ENCODE measurements at regions of chr15 and their contacts with region 1.

Region 1: GRCh38 chr15:99076552-99077308 is 28.1 kb upstream of the SYNM start:
- DNase-seq: peak; percentile 73
- H3K4me3 ChIP-seq: peak overlapping the region; percentile 6 to 50 (median 8)
- H3K27ac ChIP-seq: no peak overlapping the region
- H3K4me1 ChIP-seq: peaks cover 2% of the 10 kb centered on the region
- H3K27me3 ChIP-seq: peaks cover 0 to 2% of the 10 kb centered on the region in 2 experiments
- CTCF ChIP-seq: peak; percentile 71 to 83
- POLR2A ChIP-seq: no peak

Region 2: DNA sequence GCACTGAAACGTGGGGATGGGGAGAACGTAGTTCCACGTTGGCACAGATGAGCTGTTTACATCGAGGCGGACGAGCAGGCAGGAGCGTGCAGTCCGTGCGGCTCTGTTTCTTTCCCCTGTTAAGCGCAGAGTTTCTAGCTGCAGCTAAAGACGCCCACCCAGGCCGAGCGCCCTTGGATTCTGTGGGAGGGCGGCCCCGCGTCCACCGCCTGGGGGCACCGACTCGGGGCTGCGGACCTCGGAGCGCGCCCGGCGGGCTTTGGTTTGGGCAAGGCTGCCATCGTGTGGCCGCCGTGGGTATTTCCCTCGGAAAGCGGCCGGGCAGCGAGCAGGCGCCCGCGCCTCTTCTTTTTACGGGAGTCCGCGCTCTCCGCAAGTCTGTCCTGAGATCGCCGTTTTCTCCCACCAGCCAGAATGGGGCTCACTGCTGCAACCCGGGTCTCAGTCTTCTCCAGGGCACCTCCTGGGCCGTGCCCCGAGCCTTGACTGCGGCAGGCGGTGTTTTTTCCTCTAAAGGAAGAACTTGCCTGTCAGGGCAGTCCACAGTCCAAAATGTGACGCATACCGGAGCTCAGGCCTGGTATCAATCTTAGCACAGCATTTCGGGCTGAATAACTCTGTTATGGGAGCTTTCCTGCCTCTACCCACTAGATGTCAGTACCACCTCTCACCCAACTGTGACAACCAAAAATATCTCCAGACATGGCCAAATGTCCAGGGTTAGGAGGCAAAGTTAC is 648.3 kb before region 1 on chr15:
- CTCF ChIA-PET with region 1: interaction called, 13 read pairs
- POLR2A ChIA-PET with region 1: no interaction called
- dilution Hi-C with region 1: no loop called
- intact Hi-C with region 1: loop called (anchors 1 kb)
- DNase-seq: peak; percentile 60
- H3K4me3 ChIP-seq: no peak overlapping the region
- H3K27ac ChIP-seq: no peak overlapping the region
- H3K4me1 ChIP-seq: no peaks in the 10 kb centered on the region
- H3K27me3 ChIP-seq: no peaks in the 10 kb centered on the region
- CTCF ChIP-seq: peak; percentile 67 to 92
- POLR2A ChIP-seq: no peak

Region 3: GRCh38 chr15:98518823-98519561 is 557.7 kb before region 1 on chr15:
- CTCF ChIA-PET with region 1: interaction called, 170 read pairs
- POLR2A ChIA-PET with region 1: no interaction called
- dilution Hi-C with region 1: no loop called
- intact Hi-C with region 1: loop called (anchors 1 kb)
- DNase-seq: peak; percentile 64
- H3K4me3 ChIP-seq: no peak overlapping the region
- H3K27ac ChIP-seq: no peak overlapping the region
- H3K4me1 ChIP-seq: no peaks in the 10 kb centered on the region
- H3K27me3 ChIP-seq: no peaks in the 10 kb centered on the region
- CTCF ChIP-seq: peak; percentile 71 to 73
- POLR2A ChIP-seq: no peak

Region 4: GRCh38 chr15:98689431-98689861 is 387.3 kb before region 1 on chr15:
- CTCF ChIA-PET with region 1: no interaction called
- POLR2A ChIA-PET with region 1: no interaction called
- dilution Hi-C with region 1: no loop called
- intact Hi-C with region 1: no loop called
- DNase-seq: no peak
- H3K4me3 ChIP-seq: no peak overlapping the region
- H3K27ac ChIP-seq: no peak overlapping the region
- H3K4me1 ChIP-seq: no peaks in the 10 kb centered on the region
- H3K27me3 ChIP-seq: no peaks in the 10 kb centered on the region
- CTCF ChIP-seq: no peak
- POLR2A ChIP-seq: no peak

Region 5: DNA sequence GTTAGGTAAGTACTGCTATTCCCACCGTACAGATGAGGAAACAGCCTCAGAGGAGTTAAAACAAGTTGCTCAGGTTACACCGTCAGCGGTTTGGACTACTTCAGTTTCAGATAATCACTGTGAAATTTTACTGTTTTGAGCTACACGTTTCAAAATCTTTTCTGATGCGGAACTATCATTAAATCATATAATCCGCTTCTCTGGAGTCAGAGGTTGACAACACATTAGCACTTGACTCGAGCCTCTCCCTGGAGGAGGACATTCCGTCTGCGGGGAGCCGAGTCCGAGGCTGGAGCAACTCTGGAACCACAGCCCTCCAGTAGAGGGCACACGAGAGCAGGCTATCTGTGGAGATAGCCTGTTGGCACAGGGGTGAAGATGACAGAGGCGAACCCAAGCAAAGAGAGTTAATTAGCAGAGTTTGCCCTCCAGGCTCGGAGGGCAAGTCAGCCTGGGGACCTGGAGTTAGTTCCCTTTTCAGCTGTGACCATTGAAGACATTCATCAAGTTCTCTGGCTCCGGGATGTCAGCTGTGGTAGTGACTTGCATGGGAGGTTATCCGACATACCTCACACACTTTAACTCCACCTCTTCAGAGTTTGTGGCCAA is 297.2 kb before region 1 on chr15:
- CTCF ChIA-PET with region 1: interaction called, 9 read pairs
- POLR2A ChIA-PET with region 1: no interaction called
- dilution Hi-C with region 1: no loop called
- intact Hi-C with region 1: loop called (anchors 1 kb)
- DNase-seq: peak; percentile 77
- H3K4me3 ChIP-seq: no peak overlapping the region
- H3K27ac ChIP-seq: no peak overlapping the region
- H3K4me1 ChIP-seq: peaks cover 5% of the 10 kb centered on the region
- H3K27me3 ChIP-seq: no peaks in the 10 kb centered on the region
- CTCF ChIP-seq: peak; percentile 93 to 95
- POLR2A ChIP-seq: no peak

Region 6: GRCh38 chr15:98904544-98904943 is 172.2 kb before region 1 on chr15:
- CTCF ChIA-PET with region 1: interaction called, 9 read pairs
- POLR2A ChIA-PET with region 1: no interaction called
- dilution Hi-C with region 1: no loop called
- intact Hi-C with region 1: loop called (anchors 2 kb)
- DNase-seq: peak; percentile 53
- H3K4me3 ChIP-seq: no peak overlapping the region
- H3K27ac ChIP-seq: peak overlapping the region; percentile 15
- H3K4me1 ChIP-seq: peaks cover 42% of the 10 kb centered on the region
- H3K27me3 ChIP-seq: no peaks in the 10 kb centered on the region
- CTCF ChIP-seq: peak; percentile 52 to 58
- POLR2A ChIP-seq: no peak

Region 7: GRCh38 chr15:99059010-99059981 is 17.4 kb before region 1 on chr15:
- CTCF ChIA-PET with region 1: interaction called, 79 read pairs
- POLR2A ChIA-PET with region 1: no interaction called
- dilution Hi-C with region 1: no loop called
- intact Hi-C with region 1: loop called (anchors 1 kb)
- DNase-seq: peak; percentile 61
- H3K4me3 ChIP-seq: peak overlapping the region; percentile 34 to 60 (median 40)
- H3K27ac ChIP-seq: peak overlapping the region; percentile 12
- H3K4me1 ChIP-seq: peaks cover 8% of the 10 kb centered on the region
- H3K27me3 ChIP-seq: peaks cover 0 to 5% of the 10 kb centered on the region in 2 experiments
- CTCF ChIP-seq: peak; percentile 56 to 85
- POLR2A ChIP-seq: no peak

Measured in endothelial cell of umbilical vein (primary cell).